ENCODE measurements at regions of chr22 and their contacts with region 1.

Region 1: GRCh38 chr22:39003165-39003638 is 10.9 kb upstream of the APOBEC3C start:
- DNase-seq: peak; percentile 83
- ATAC-seq: peak; percentile 96 to 97
- H3K4me3 ChIP-seq: no peak overlapping the region
- H3K27ac ChIP-seq: peak overlapping the region; percentile 8
- H3K4me1 ChIP-seq: peaks cover 8% of the 10 kb centered on the region
- H3K27me3 ChIP-seq: no peaks in the 10 kb centered on the region
- CTCF ChIP-seq: peak; percentile 79

Region 2: DNA sequence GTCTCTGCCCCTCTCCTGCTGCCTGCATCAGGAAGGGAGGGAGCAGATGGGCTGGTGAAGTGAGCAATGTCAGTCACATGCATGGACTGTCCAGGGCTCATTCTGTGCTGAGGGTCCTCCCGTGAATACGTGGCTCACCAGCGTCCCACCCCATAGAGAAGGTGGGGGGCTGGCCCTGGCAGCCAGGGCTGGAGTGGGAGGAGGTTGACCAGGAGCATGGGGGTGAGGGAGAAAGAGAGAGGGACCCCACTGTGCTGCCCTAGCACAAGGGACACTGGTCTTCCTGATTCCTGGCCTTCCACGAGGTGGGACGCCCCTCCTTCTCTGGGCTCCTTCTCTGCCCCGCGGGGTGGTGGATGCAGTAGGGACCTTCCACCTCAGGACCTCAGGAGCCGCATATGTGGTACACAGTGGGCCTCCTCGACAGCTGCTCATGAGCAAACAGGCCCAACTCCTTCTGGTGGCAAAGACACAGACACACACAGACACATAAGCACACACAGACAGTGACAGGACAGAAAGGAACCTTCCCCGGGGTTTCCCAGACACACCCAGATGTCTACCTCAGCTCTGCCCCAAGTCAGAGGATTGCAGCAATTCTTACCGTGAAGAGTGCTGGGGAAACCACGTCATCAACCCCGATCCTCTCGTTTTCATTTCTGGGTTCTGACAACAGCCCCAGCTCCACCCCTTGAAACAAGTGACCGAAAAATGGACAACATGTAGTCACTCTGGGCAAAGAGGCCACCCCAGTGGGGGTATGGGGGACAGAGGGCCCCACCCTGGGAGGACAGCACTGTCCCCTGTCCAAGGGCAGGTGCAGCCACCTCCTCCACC is 49.4 kb before region 1 on chr22:
- intact Hi-C with region 1: loop called (anchors 10 kb)
- DNase-seq: no peak
- ATAC-seq: peak; percentile 65 to 70
- H3K4me3 ChIP-seq: no peak overlapping the region
- H3K27ac ChIP-seq: peak overlapping the region; percentile 59
- H3K4me1 ChIP-seq: peaks cover 18% of the 10 kb centered on the region
- H3K27me3 ChIP-seq: peaks cover 3% of the 10 kb centered on the region
- CTCF ChIP-seq: no peak

Region 3: GRCh38 chr22:39230261-39231196 is 227.3 kb after region 1 on chr22:
- intact Hi-C with region 1: no loop called
- DNase-seq: no peak
- ATAC-seq: no peak
- H3K4me3 ChIP-seq: no peak overlapping the region
- H3K27ac ChIP-seq: peak overlapping the region; percentile 18
- H3K4me1 ChIP-seq: peaks cover 46% of the 10 kb centered on the region
- H3K27me3 ChIP-seq: peaks cover 5% of the 10 kb centered on the region
- CTCF ChIP-seq: no peak

Measured in lower lobe of right lung (tissue), 2 donors.